Uterus (tissue), 4 donors: ENCODE measurements at regions of chr14 and their contacts with region 1.

Region 1: DNA sequence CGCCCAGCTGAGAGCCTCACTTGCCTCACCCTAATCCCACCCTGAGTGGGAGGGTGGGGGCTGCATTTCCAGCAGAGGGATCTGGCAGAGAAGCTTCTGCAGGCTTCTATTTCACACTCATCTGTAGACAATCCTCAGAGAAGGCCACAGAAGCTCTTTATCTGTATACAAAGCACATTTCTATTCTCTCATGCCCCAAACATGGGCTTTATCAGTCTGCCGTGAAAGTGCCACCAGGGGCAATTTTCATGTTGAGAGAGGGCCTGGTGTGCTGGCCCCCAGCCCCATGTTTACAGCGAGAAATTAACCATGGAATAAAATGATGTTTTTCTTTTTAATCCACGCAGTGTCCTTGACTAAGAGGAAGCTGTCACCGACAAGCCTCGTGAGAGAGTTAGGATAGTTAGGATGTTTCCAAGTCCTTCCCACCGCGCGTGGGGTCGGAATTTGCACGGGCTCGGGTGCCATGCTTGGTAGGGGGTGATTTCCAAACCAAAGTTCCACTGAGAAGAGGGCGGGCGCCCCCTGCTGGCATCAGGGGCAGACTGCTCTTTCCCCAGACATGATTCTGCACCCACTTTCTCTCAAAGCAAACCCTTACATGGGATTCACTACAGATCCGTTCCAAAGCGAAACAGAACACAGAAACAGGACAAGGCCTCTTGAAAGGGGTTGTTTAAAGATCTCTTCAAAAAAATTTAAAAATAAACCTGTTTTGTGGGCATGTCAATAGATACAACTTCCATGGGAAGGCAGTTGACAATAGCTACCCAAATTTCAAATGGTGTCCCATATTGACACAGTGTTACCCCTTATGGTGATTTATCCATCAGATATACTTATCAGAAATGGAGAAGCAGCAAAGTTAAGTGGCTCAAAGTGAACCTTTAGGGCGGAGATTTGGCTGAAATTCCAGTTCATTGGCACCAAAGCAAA is 19.4 kb downstream of the BDKRB1 start:
- DNase-seq: peak; percentile 68 to 72
- H3K4me3 ChIP-seq: no peak overlapping the region
- H3K27ac ChIP-seq: peak overlapping the region in 1 of 2 donors; percentile 15
- H3K4me1 ChIP-seq: no peaks in the 10 kb centered on the region
- H3K27me3 ChIP-seq: no peaks in the 10 kb centered on the region
- CTCF ChIP-seq: peak; percentile 87 to 97 (median 92)
- POLR2A ChIP-seq: no peak

Region 2: DNA sequence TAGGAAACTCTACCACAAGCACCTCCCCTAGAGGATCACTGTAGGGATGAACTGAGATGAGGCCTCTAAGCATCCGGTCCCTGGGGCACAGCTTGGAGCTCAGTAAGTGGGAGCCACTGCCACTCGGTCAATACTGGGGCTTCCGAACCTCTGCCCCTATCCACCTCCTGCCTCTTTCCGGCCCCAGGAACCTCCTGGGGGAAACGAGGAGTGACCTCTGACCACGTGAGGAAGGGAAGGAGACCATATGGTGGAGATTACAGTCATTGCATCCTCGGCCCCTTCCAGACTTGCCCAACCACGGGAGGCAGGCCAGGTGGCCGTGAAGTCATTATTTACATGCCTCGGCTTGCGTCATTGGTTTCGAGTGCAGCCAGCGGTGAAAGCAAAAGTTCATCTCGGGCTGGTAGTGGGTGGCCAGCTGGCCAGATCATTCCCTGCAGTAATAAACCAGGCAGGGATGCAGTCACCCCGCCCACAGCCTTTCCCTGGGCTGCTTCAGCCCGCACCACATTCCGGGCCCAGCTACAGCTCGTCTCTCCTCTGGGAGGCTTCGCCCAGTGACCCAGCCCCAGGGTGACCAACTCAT is 170.9 kb before region 1 on chr14:
- intact Hi-C with region 1: loop called (anchors 5 kb)
- DNase-seq: peak; percentile 85 to 87
- H3K4me3 ChIP-seq: no peak overlapping the region
- H3K27ac ChIP-seq: peak overlapping the region; percentile 64 to 69
- H3K4me1 ChIP-seq: no peaks in the 10 kb centered on the region
- H3K27me3 ChIP-seq: no peaks in the 10 kb centered on the region
- CTCF ChIP-seq: no peak
- POLR2A ChIP-seq: no peak

Region 3: DNA sequence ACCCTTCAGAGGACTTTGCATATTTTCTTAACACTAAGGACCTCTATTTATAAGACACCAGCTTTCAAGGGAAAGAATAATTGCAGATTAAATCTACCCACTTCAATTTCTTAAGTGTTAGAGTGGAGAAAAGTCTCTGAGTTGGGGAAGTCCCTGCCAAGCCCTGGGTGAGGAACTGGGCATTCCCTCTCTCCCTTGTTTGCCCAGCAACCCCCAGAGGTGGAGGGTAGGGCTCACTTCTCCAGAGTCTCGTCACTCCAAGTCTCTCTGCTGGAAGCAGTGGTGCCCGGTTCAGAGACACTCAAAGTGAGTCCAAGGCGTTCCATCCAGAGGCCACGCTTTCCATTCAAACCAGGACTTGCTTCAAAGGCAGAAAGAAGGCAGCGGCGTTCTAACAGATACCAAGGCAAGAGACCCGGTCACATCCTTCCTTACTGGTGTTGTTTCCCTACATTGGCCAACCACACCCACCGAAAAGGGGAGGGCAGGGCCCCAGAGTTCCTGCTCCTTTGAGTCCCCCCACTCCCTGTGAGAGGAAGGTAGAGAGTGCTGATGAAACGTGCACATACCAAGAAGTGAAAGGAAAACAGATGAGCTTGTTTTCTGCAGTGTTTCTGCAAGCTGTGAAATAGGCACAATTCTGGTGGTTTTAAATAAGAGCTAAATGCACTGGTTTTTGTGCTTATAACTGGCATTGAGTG is 76.9 kb before region 1 on chr14:
- intact Hi-C with region 1: no loop called
- DNase-seq: no peak
- H3K4me3 ChIP-seq: no peak overlapping the region
- H3K27ac ChIP-seq: peak overlapping the region; percentile 34 to 63
- H3K4me1 ChIP-seq: no peaks in the 10 kb centered on the region
- H3K27me3 ChIP-seq: no peaks in the 10 kb centered on the region
- CTCF ChIP-seq: no peak
- POLR2A ChIP-seq: no peak

Region 4: DNA sequence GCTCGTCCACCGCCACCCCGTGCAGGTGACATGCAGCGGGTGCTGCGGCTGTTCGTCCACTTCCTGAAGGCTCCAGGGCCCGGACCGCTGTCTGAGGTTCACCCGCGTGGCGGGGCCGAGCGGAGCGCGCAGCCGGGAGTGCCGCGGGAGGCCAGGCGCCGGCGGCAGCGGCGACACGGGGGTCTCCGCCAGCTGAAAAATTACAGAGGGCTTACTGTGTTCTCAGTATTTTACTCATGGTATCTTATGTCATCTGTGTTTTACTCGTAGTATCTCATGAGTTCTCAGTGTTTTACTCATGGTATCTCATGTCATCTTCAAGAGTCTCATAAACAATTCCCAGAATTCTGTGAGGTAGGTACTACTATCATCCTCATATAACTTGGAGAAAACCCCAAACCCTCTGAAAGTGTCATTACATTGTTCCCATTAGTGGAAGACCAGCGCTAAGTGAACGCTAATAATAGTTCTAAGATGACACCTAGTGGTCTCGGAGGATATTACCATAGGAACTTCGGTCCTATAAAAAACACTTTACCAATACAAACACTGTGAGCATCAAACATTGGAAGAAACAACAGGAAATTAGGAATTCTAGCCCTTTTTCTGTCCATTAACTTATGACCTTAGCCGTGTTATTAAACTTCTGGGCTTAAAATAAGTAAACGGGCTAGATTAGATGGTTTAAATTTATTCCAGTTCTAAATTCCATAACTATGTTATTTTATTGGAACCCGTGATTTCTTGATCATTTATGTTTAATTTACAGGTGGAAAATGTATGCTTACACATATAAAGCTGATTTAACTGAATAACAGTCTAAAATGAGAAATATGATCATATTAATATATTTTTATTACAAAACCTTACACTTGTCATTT is 148.9 kb after region 1 on chr14:
- intact Hi-C with region 1: no loop called
- DNase-seq: peak in 1 of 2 donors; percentile 16
- H3K4me3 ChIP-seq: peak overlapping the region in 1 of 2 donors; percentile 3
- H3K27ac ChIP-seq: no peak overlapping the region
- H3K4me1 ChIP-seq: no peaks in the 10 kb centered on the region
- H3K27me3 ChIP-seq: no peaks in the 10 kb centered on the region
- CTCF ChIP-seq: peak; percentile 79 to 85 (median 83)
- POLR2A ChIP-seq: no peak

Region 5: GRCh38 chr14:96938946-96939345 is 663.5 kb after region 1 on chr14:
- intact Hi-C with region 1: no loop called
- DNase-seq: no peak
- H3K4me3 ChIP-seq: no peak overlapping the region
- H3K27ac ChIP-seq: no peak overlapping the region
- H3K4me1 ChIP-seq: no peaks in the 10 kb centered on the region
- H3K27me3 ChIP-seq: no peaks in the 10 kb centered on the region
- CTCF ChIP-seq: no peak
- POLR2A ChIP-seq: no peak